WTC11 (cell line): ENCODE measurements at regions of chr7 and their contacts with region 1.

Region 1: DNA sequence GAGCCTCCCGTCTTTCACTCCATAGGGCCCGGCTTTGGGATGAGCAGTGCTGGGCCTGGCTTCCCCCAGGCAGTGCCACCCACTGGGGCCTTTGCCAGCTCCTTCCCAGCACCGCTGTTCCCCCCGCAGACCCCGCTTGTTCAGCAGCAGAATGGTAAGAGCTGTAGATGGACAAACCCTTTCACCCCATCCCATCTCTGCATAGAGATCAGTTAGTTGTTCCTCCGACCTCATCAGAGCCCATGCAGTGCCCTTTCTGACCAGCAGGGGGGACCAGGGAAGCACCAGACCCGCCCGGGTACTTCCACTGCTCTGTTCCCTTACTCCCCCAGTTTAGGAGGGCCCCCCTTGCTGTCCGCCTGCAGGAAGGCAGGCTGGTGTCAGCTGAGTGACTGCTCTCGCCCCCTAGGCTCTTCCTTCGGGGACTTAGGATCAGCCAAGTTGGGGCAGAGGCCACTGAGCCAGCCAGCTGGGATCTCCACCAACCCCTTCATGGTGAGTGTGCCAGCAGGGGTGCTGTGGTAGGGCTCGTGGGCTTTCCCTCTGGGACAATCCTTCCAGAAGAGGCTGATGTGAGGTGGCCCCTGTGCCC is 9.8 kb downstream of the SAP25 start:
- DNase-seq: peak; percentile 94
- ATAC-seq: peak; percentile 72
- H3K4me3 Mint-ChIP-seq: no peak overlapping the region
- H3K27ac Mint-ChIP-seq: no peak overlapping the region
- H3K4me1 Mint-ChIP-seq: peaks cover 23% of the 10 kb centered on the region
- H3K27me3 Mint-ChIP-seq: no peaks in the 10 kb centered on the region; the same call in 1 of the 2 replicates
- CTCF ChIP-seq: peak; percentile 99

Region 2: GRCh38 chr7:100456558-100456957 is 107.3 kb before region 1 on chr7:
- CTCF ChIA-PET with region 1: interaction called, 56 read pairs
- POLR2A ChIA-PET with region 1: no interaction called
- DNase-seq: peak; percentile 47
- ATAC-seq: peak; percentile 73
- H3K4me3 Mint-ChIP-seq: no peak overlapping the region
- H3K27ac Mint-ChIP-seq: no peak overlapping the region
- H3K4me1 Mint-ChIP-seq: peaks cover 10% of the 10 kb centered on the region
- H3K27me3 Mint-ChIP-seq: no peaks in the 10 kb centered on the region; the same call in 1 of the 2 replicates
- CTCF ChIP-seq: no peak

Region 3: DNA sequence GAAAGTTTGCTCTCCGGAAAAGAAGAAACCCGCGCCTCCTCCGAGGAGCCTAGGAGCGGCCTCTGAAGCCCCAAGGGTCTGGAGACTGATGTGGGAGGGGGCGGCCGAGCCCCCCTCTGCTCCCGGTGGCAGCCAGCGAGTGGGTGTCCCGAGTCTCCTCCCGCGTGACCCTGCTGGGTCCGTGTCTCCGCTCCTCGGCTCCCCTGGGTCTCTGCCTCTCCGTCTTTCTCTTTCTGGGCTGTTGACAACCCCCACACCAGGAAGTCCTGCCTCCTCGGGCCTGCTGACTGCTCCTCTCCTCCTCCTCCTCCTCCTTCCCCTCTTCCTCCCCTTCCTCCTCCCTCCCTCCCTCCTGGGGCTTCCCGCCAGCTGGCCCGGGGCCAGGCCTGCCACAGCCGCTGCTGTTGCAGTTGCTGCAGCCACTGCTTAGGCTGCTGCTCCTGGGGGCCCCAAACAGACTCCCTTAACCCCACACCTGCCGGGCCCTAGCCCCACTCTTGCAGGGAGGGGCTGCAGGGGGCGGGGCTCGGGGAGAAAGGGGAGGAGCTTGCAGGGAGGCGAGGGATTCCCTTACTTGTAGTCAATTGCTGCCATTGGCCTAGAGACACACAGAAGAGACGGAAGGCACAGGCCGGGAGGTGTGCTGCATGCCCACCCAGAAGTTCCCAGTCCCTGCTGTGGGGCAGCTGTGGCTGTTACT is 84.8 kb before region 1 on chr7 and contains the start of gene TSC22D4:
- CTCF ChIA-PET with region 1: interaction called, 28 read pairs
- POLR2A ChIA-PET with region 1: interaction called, 3 read pairs
- DNase-seq: peak; percentile 96
- ATAC-seq: peak; percentile 70
- H3K4me3 Mint-ChIP-seq: peak within 1 kb of the TSS; percentile 78
- H3K27ac Mint-ChIP-seq: peak within 1 kb of the TSS; percentile 92
- H3K4me1 Mint-ChIP-seq: peaks cover 20% of the 10 kb centered on the region
- H3K27me3 Mint-ChIP-seq: no peaks in the 10 kb centered on the region
- CTCF ChIP-seq: no peak
- total RNA-seq, gene TSC22D4: 27.5 to 34.5 TPM (median 29.7 TPM) in 3 replicates

Region 4: GRCh38 chr7:100532165-100533022 is 31.5 kb before region 1 on chr7:
- CTCF ChIA-PET with region 1: interaction called, 19 read pairs
- POLR2A ChIA-PET with region 1: no interaction called
- DNase-seq: no peak
- ATAC-seq: no peak
- H3K4me3 Mint-ChIP-seq: no peak overlapping the region
- H3K27ac Mint-ChIP-seq: no peak overlapping the region
- H3K4me1 Mint-ChIP-seq: no peaks in the 10 kb centered on the region
- H3K27me3 Mint-ChIP-seq: no peaks in the 10 kb centered on the region; the same call in 1 of the 2 replicates
- CTCF ChIP-seq: no peak

Region 5: DNA sequence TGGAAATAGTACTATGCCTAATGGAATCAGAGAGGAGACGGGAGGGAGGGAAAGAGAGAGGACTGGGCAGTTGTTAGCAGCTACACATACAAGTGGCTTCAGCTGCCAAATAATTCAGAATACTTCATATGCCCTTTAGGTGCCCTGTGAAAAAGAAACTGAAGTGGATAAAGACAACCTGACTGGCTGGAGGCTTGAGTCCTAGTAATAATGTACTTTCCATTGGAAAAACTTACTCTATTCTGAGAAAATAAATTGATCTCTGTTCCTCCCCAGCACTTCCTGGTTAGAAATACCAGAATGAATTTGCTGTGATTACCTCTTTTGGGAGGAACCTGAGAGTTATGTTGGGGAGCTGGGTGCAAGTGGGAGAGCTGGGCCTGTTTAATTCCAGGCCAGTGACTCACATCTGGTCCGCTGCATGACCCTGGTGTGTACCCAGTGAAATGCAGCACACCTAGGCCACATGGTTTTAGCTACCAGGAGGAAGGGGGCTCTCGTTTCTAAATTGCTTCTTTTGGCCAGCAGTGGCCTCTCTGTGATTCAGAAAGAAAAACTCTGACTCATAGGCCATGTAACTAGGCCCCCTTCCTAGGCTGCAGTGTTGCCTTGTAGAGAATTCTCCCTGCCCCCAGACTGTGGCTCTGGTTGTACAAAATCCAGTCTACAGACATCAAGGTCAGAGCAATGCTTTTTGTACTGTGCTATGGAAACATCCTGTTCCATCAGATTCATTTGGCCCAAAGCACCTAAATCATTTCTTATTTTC is 18.4 kb before region 1 on chr7:
- CTCF ChIA-PET with region 1: interaction called, 58 read pairs
- POLR2A ChIA-PET with region 1: interaction called, 3 read pairs
- DNase-seq: no peak
- ATAC-seq: peak; percentile 83
- H3K4me3 Mint-ChIP-seq: no peak overlapping the region
- H3K27ac Mint-ChIP-seq: peak overlapping the region; percentile 81
- H3K4me1 Mint-ChIP-seq: peaks cover 65% of the 10 kb centered on the region
- H3K27me3 Mint-ChIP-seq: peaks cover 11% of the 10 kb centered on the region
- CTCF ChIP-seq: no peak

Region 6: DNA sequence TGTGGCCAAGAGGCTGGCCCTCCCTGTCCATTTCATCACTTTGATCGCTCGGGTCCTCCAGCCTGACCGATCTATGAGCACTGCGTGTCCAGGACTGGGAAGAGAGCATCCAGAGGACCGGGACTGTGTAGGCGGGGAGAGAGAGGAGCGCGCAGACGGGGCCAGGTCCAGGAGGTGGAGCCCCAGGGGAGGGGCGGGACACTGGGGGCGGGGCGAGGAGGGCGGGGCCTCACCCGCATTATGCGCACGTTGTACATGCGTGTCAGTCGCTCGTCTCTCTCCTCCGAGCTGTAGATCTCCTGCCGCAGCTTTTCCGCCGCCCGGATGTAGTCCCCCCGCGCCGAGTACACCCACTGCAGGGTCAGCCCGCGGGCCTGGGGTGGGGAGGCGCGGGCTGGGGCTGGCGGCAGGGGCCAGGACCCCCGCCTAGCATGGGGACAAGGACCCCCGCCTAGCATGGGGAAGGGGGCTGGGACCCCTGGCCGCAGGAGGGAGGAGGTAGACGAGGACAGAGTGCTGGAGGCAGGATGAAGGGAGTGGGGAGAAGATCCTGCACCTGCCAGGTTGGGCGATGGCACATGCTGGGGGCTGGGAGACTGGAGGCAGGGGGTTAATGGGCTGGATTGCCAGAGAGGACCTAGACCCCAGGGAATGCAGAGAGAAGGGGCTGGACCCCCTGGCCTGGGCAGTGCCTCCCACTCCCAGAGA is 62.8 kb after region 1 on chr7:
- CTCF ChIA-PET with region 1: interaction called, 10 read pairs
- POLR2A ChIA-PET with region 1: no interaction called
- DNase-seq: peak; percentile 87
- ATAC-seq: peak; percentile 89
- H3K4me3 Mint-ChIP-seq: peak overlapping the region; percentile 65
- H3K27ac Mint-ChIP-seq: no peak overlapping the region
- H3K4me1 Mint-ChIP-seq: peaks cover 7% of the 10 kb centered on the region
- H3K27me3 Mint-ChIP-seq: peaks cover 22% of the 10 kb centered on the region
- CTCF ChIP-seq: no peak